Activated CD4-positive, alpha-beta T cell treated with anti-CD3 and anti-CD28 coated beads, Interleukin-2, amount 10 ng/mL, durations not matched to agents 24 days and 14 days (primary cell): ENCODE measurements at regions of chr11 and their contacts with region 1.

Region 1: GRCh38 chr11:66100272-66101065 is 30.4 kb downstream of the PACS1 start:
- DNase-seq: peak; percentile 91
- H3K4me3 Mint-ChIP-seq: peak overlapping the region; percentile 77
- H3K27ac Mint-ChIP-seq: peak overlapping the region; percentile 94
- H3K4me1 Mint-ChIP-seq: peaks cover 38% of the 10 kb centered on the region
- H3K27me3 Mint-ChIP-seq: no peaks in the 10 kb centered on the region

Region 2: DNA sequence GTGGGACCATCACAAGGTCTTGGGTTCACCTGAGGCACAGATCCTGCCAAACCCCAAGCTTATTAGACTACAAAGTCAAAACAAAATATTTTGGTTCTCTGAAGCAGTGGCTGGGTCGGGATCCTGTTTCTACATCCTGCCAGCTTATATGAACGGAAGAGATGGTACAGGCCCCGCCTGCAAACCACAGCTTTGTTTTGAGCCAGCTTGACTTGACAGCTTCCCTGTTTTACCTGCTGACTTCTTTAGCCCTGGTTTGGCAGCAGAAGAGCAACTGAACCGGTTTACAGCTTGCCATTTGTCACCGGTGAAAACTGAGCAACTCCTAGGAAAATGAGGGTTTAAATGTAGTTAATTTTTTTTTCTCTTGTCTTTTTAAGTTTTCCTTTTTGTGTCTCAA is 19.0 kb before region 1 on chr11:
- intact Hi-C with region 1: loop called (anchors 2 kb)
- DNase-seq: peak; percentile 92
- H3K4me3 Mint-ChIP-seq: peak overlapping the region; percentile 83
- H3K27ac Mint-ChIP-seq: peak overlapping the region; percentile 89
- H3K4me1 Mint-ChIP-seq: peaks cover 62% of the 10 kb centered on the region
- H3K27me3 Mint-ChIP-seq: no peaks in the 10 kb centered on the region

Region 3: DNA sequence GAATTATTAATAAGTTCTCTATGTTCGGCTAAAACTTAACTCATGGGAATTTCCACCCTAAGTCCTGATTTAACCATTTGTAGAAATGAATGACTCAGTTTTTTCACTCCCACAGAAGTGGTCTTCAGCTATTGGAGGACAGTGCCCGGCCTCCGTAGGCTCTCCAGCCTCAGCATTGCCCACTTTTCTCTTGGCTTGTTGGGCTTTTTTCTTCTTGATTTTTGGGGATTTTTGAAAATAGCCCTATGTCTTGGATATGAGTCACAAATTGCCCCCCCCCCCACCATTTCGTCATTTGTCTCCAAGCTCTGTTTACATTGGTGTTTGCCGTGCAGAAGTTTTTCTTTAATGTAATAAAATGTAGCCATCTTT is 36.3 kb after region 1 on chr11:
- intact Hi-C with region 1: loop called (anchors 5 kb)
- DNase-seq: no peak
- H3K4me3 Mint-ChIP-seq: no peak overlapping the region
- H3K27ac Mint-ChIP-seq: peak overlapping the region; percentile 37
- H3K4me1 Mint-ChIP-seq: peaks cover 31% of the 10 kb centered on the region
- H3K27me3 Mint-ChIP-seq: no peaks in the 10 kb centered on the region